GM12878 (cell line): ENCODE measurements at regions of chr18 and their contacts with region 1.

Region 1: GRCh38 chr18:21851327-21851972 is 110.9 kb downstream of the MIB1 start:
- DNase-seq: no peak
- ATAC-seq: peak; percentile 65
- H3K4me3 ChIP-seq: no peak overlapping the region
- H3K27ac ChIP-seq: no peak overlapping the region
- H3K4me1 ChIP-seq: peaks cover 13% of the 10 kb centered on the region
- H3K27me3 ChIP-seq: no peaks in the 10 kb centered on the region
- CTCF ChIP-seq: peak in 2 of 3 experiments; percentile 38 to 50; a peak in 4 of 6 replicates
- EP300 ChIP-seq: no peak
- POLR2A ChIP-seq: no peak
- RAD21 ChIP-seq: peak; percentile 78

Region 2: DNA sequence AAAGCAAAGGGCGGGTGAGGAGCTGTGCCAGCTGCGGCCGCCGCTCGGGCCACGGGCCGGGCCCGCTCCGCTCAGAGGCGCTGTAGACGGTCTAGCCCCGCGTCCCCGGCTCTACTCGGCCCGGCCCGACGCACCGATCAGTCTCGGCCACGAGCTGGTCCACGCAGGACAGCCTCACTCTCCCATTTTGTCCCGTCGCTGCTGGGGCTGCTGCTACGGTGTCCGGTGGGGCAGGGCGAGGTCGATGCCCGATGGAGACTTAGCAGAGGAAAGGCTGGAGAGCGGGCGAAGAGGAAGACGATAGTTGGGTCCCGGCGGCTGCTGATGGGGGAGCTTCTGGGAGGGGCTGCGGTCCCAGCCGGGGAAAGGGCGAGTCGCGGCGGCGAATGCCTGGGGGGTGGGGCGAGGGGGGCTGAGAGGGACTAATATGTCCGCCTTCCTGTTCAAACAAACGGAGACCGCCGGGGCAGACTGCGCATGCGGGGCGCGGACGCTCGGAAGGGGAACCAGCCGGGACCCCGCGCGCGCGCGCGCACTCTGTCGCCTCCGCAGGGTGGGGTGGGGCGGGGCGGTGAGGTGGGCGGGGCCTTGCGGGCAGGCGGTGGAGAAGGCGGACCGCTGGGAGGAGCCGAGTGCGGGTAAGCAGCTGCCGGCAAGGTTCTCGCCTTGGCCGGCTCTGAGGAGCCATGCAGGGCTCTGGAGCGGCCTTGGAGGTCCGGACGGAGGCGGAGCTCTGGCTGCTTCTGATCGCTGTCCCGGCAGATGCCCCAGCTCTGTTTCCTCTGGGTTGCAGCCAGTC is 739.9 kb before region 1 on chr18 and contains the start of gene ROCK1:
- CTCF ChIA-PET with region 1: no interaction called
- POLR2A ChIA-PET with region 1: no interaction called
- RAD21 ChIA-PET with region 1: no interaction called
- SMC1A ChIA-PET with region 1: no interaction called
- in situ Hi-C with region 1: loop called (anchors 25 kb)
- intact Hi-C with region 1: no loop called
- DNase-seq: peak; percentile 65
- ATAC-seq: peak; percentile 91
- H3K4me3 ChIP-seq: peak within 1 kb of the TSS; percentile 92
- H3K27ac ChIP-seq: peak within 1 kb of the TSS; percentile 96
- H3K4me1 ChIP-seq: no peaks in the 10 kb centered on the region
- H3K27me3 ChIP-seq: no peaks in the 10 kb centered on the region
- CTCF ChIP-seq: no peak
- EP300 ChIP-seq: no peak
- POLR2A ChIP-seq: peak; percentile 73; the same call in 1 of the 2 replicates
- RAD21 ChIP-seq: no peak
- polyA plus RNA-seq, gene ROCK1: 14.8 to 15.1 TPM

Region 3: DNA sequence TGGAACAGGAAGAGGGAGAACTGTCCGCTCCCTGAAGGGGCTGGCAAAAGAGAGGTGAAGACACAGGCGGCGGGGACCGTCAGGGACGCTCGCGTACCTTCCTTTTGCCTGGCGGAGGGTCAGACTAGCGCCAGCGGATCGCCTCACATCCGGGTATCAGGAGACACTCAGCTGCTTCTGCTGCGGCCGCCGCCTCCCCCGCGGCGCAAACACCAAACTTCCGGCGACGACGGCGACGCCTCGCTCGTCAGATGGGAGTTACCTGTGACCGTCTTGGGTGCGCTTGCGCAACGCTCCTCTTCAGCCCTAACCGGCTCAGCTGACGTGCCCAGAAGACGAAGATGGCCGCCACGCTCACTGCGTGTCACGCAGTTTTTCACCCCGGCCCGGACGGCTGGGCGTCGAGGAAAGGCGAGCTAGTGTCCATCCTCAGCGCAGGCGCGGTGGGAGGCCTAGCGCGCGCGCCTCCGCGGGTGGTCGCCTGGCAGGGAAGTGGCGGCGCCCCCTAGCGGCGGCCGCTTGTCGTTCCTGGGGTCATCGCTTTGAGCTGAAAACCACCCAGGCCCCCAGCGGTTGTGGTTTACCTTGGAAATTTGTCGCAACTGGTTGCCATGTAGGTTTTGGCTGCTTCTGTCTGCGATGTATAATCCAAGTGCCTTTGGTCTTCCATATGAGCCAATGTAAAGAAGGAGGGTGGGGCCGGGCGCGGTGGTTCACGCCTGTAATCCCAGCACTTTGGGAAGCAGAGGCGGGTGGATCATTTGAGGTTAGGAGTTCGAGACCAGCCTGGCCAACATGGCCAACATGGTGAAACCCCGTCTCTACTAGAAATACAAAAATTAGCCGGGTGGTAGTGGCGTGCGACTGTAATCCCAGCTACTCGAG is 250.7 kb before region 1 on chr18 and contains the start of gene ESCO1:
- CTCF ChIA-PET with region 1: interaction called, 11 read pairs
- POLR2A ChIA-PET with region 1: no interaction called
- RAD21 ChIA-PET with region 1: interaction called, 5 read pairs
- SMC1A ChIA-PET with region 1: interaction called, 4 read pairs
- in situ Hi-C with region 1: no loop called
- intact Hi-C with region 1: no loop called
- DNase-seq: peak; percentile 95
- ATAC-seq: peak; percentile 90
- H3K4me3 ChIP-seq: peak within 1 kb of the TSS; percentile 76
- H3K27ac ChIP-seq: peak within 1 kb of the TSS; percentile 90
- H3K4me1 ChIP-seq: peaks cover 27% of the 10 kb centered on the region
- H3K27me3 ChIP-seq: no peaks in the 10 kb centered on the region
- CTCF ChIP-seq: peak; percentile 90 to 95 (median 93)
- EP300 ChIP-seq: no peak; a peak in 1 of 4 replicates
- POLR2A ChIP-seq: peak; percentile 98
- RAD21 ChIP-seq: peak; percentile 38; the same call in 1 of the 2 replicates
- polyA plus RNA-seq, gene ESCO1: 9.6 to 11.2 TPM

Region 4: GRCh38 chr18:21636769-21637168 is 214.7 kb before region 1 on chr18:
- CTCF ChIA-PET with region 1: no interaction called
- POLR2A ChIA-PET with region 1: interaction called, 3 read pairs
- RAD21 ChIA-PET with region 1: no interaction called
- SMC1A ChIA-PET with region 1: interaction called, 3 read pairs
- in situ Hi-C with region 1: no loop called
- intact Hi-C with region 1: loop called (anchors 5 kb)
- DNase-seq: no peak
- ATAC-seq: no peak
- H3K4me3 ChIP-seq: no peak overlapping the region
- H3K27ac ChIP-seq: no peak overlapping the region
- H3K4me1 ChIP-seq: no peaks in the 10 kb centered on the region; the same call in 1 of the 2 replicates
- H3K27me3 ChIP-seq: no peaks in the 10 kb centered on the region
- CTCF ChIP-seq: no peak
- EP300 ChIP-seq: no peak
- POLR2A ChIP-seq: no peak
- RAD21 ChIP-seq: no peak

Region 5: DNA sequence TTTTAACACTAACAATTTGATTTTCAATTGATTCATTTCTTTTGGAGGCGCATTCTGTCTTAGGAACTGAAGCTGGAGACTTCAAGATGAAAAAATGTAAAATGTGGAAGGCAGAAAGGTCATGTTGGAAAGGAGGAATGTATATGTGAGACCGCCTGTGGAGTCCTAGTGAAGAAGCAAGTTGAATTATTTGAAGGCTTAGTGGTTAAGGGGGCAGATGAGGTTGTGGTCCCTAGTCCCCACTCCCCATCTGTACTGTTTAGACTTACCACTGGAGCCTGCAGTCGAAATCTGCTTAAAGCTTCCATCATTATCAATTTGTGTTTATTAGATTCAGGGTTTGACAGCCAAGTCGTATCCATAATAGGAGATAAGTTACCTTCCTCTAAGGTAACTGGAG is 126.2 kb before region 1 on chr18:
- CTCF ChIA-PET with region 1: no interaction called
- POLR2A ChIA-PET with region 1: no interaction called
- RAD21 ChIA-PET with region 1: no interaction called
- SMC1A ChIA-PET with region 1: no interaction called
- in situ Hi-C with region 1: no loop called
- intact Hi-C with region 1: no loop called
- DNase-seq: no peak
- ATAC-seq: no peak
- H3K4me3 ChIP-seq: no peak overlapping the region
- H3K27ac ChIP-seq: no peak overlapping the region
- H3K4me1 ChIP-seq: no peaks in the 10 kb centered on the region
- H3K27me3 ChIP-seq: no peaks in the 10 kb centered on the region
- CTCF ChIP-seq: no peak
- EP300 ChIP-seq: no peak
- POLR2A ChIP-seq: no peak
- RAD21 ChIP-seq: no peak

Region 6: DNA sequence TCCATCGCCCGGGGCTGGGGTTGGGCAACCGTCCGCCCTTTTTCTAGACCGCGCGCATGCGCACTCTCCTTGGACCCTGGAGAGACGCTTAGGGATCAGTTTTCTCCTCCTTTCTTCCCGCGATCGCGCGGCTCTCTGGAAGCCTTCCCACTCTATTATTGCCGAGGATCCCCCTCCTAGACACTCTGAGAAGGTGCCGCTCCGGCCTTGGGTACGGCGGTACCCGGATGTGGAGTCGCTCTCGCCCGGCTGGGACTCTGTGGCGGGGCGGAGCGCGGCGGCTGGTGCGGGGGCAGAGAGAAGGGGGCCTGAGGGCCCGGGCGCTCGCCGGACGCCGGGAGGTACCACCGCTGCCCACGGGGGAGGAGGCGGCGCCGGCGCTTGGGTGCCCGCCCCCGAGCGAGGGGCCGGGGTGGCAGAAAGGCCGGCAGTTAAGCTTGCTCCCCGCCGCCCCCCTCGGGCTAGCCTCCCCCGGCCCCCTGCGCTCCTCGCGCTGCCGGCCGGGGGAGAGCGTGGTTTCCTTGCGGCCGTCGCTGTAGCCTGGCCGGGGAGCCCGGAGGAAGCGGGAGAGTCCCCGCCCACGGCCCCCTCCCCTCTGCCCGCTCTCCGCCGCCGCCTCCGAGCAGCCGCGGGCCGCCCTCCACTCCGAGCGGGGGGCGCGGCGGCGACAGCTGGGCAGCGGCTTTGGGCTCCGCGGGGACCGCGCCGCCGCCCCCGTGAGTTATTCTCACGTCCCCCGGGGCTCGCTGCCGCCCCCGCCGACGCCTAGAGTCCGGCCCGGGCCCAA is 110.5 kb before region 1 on chr18 and contains the start of gene MIB1:
- CTCF ChIA-PET with region 1: interaction called, 4 read pairs
- POLR2A ChIA-PET with region 1: no interaction called
- RAD21 ChIA-PET with region 1: no interaction called
- SMC1A ChIA-PET with region 1: no interaction called
- in situ Hi-C with region 1: no loop called
- intact Hi-C with region 1: loop called (anchors 5 kb)
- DNase-seq: peak; percentile 83
- ATAC-seq: peak; percentile 85
- H3K4me3 ChIP-seq: peak within 1 kb of the TSS; percentile 96
- H3K27ac ChIP-seq: peak within 1 kb of the TSS; percentile 91
- H3K4me1 ChIP-seq: no peaks in the 10 kb centered on the region
- H3K27me3 ChIP-seq: no peaks in the 10 kb centered on the region
- CTCF ChIP-seq: no peak
- EP300 ChIP-seq: no peak
- POLR2A ChIP-seq: peak; percentile 64
- RAD21 ChIP-seq: no peak
- polyA plus RNA-seq, gene MIB1: 3.6 to 4.8 TPM

Region 7: GRCh38 chr18:21904856-21905255 is 53.4 kb after region 1 on chr18:
- CTCF ChIA-PET with region 1: no interaction called
- POLR2A ChIA-PET with region 1: no interaction called
- RAD21 ChIA-PET with region 1: no interaction called
- SMC1A ChIA-PET with region 1: no interaction called
- in situ Hi-C with region 1: no loop called
- intact Hi-C with region 1: no loop called
- DNase-seq: no peak
- ATAC-seq: no peak
- H3K4me3 ChIP-seq: no peak overlapping the region
- H3K27ac ChIP-seq: no peak overlapping the region
- H3K4me1 ChIP-seq: no peaks in the 10 kb centered on the region
- H3K27me3 ChIP-seq: no peaks in the 10 kb centered on the region; a peak in 2 of 4 replicates
- CTCF ChIP-seq: no peak
- EP300 ChIP-seq: no peak
- POLR2A ChIP-seq: no peak
- RAD21 ChIP-seq: no peak